H1 (cell line): ENCODE measurements at regions of chr4 and their contacts with region 1.

Region 1: DNA sequence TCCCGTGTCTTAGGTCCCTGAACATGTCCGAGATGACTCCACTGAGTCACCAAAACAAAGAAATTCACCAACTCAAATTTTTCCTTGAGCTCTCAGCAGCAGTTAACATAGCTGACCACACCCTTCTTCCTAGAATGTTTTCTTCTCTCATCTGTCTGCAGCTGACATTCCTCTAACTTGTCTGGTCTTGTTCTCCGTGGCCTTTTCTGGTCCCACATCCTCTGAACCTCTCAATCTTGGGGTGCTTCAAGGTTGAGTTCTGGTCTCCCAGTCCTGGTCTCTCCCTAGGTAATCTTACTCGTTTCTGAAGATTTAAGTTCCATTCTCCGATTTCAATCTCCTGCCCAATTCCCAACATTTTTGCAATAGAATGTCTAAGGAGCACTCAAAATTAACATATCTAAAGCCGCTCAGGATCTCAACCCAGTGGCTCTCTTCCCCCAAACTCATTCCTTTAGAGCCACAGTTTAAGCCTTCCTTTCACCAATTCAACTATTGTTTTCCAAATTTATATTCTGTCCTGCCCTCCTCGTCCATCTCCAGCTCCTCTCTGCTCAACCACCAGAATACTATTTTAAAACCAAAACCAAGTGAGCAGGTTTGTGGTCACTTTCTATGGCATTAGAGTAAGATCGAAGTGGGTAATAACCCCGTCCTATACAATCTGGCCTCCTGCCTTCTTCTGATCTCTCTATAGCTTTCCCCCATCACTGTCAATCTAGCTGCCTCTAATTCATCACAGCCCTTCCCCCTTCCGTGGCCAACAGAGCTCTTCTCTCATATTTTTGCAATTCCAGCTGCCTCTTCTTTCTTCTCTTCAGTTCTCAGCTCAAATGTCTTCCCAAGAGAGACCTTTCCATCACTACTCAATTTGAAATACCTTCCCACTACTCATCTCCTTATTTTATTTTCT is 1.2 kb downstream of the TRIML2 start:
- DNase-seq: peak; percentile 56 to 72
- H3K4me3 ChIP-seq: peak overlapping the region; percentile 31 to 70 (median 37)
- H3K27ac ChIP-seq: peak overlapping the region; percentile 88
- H3K4me1 ChIP-seq: peaks cover 0 to 16% (median 8%) of the 10 kb centered on the region in 4 experiments; a peak in 6 of 7 replicates
- H3K27me3 ChIP-seq: no peaks in the 10 kb centered on the region
- CTCF ChIP-seq: no peak
- EP300 ChIP-seq: 0 out of 3 replicates have a peak, but pooled peaks of 1 of the 2 experiments have one; percentile 51
- POLR2A ChIP-seq: no peak; a peak in 1 of 3 replicates
- RAD21 ChIP-seq: peak in 1 of 2 experiments; percentile 5; a peak in 1 of 4 replicates

Region 2: GRCh38 chr4:187999406-187999932 is 108.7 kb before region 1 on chr4:
- CTCF ChIA-PET with region 1: interaction called, 6 read pairs
- POLR2A ChIA-PET with region 1: interaction called, 11 read pairs
- DNase-seq: peak in 1 of 2 experiments; percentile 16
- H3K4me3 ChIP-seq: peak overlapping the region in 3 of 4 experiments; percentile 10 to 72 (median 18); a peak in 5 of 8 replicates
- H3K27ac ChIP-seq: no peak overlapping the region
- H3K4me1 ChIP-seq: peaks cover 7 to 11% (median 7%) of the 10 kb centered on the region in 4 experiments
- H3K27me3 ChIP-seq: no peaks in the 10 kb centered on the region
- CTCF ChIP-seq: no peak
- EP300 ChIP-seq: no peak
- POLR2A ChIP-seq: peak in 1 of 2 experiments; percentile 64; a peak in 1 of 3 replicates
- RAD21 ChIP-seq: no peak

Region 3: DNA sequence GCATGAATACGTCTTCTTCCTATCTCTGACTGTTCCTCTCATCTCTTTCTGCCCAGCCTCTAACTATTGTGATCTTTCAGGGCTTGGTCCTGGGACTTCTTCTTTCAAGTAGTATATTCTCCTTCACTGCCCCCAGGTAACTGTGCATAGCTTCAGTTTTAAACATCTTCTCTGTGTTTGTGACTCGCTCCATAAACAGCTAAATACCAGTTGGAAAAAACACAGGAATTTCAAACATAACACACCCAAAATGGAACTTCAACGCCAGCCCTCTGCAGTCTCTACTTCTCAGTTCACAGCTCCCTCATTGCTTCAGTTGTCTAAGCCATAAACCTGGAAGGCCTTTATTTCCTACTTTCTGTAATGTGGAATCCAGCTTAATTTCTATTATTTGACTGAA is 15.4 kb before region 1 on chr4:
- CTCF ChIA-PET with region 1: interaction called, 3 read pairs
- POLR2A ChIA-PET with region 1: interaction called, 47 read pairs
- DNase-seq: no peak
- H3K4me3 ChIP-seq: no peak overlapping the region
- H3K27ac ChIP-seq: no peak overlapping the region
- H3K4me1 ChIP-seq: no peaks in the 10 kb centered on the region
- H3K27me3 ChIP-seq: no peaks in the 10 kb centered on the region
- CTCF ChIP-seq: no peak
- EP300 ChIP-seq: no peak
- POLR2A ChIP-seq: no peak
- RAD21 ChIP-seq: no peak

Region 4: DNA sequence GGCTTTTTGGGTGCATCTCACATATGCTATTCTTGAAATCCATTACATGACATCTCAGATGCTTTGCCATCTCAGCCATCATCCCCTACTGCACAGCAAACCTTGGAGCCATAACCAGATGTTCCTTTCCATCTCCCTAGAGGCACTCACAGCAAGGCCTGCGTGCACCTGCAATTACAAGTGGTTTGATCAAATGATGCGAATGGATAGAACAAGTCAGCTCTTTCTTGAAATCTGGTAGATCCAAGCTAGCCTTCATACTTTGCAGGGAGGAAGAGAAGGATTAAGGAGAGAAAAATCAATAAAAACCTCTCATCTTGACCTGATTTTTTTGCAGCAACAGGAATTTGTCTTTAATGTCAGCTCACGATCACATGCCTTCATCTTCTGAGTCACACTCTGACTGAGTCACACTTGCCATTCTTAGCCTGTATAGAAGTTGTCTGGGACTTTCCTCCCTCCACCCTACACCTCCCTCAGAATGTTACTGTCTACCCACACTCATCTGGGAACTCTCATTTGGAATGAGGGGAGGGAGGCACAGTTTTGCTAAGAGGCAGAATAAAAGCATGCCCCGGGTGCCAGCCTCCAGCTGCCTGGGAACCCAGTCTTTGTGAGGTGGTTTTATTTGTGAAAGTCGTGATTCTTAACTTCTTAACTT is 19.2 kb after region 1 on chr4:
- CTCF ChIA-PET with region 1: interaction called, 4 read pairs
- POLR2A ChIA-PET with region 1: interaction called, 13 read pairs
- DNase-seq: no peak
- H3K4me3 ChIP-seq: no peak overlapping the region
- H3K27ac ChIP-seq: no peak overlapping the region
- H3K4me1 ChIP-seq: peaks cover 0 to 3% (median 2%) of the 10 kb centered on the region in 4 experiments; a peak in 5 of 7 replicates
- H3K27me3 ChIP-seq: no peaks in the 10 kb centered on the region
- CTCF ChIP-seq: no peak
- EP300 ChIP-seq: no peak
- POLR2A ChIP-seq: no peak
- RAD21 ChIP-seq: no peak

Region 5: GRCh38 chr4:188295899-188296298 is 187.7 kb after region 1 on chr4:
- CTCF ChIA-PET with region 1: no interaction called
- POLR2A ChIA-PET with region 1: no interaction called
- DNase-seq: no peak
- H3K4me3 ChIP-seq: no peak overlapping the region
- H3K27ac ChIP-seq: no peak overlapping the region
- H3K4me1 ChIP-seq: no peaks in the 10 kb centered on the region; a peak in 1 of 7 replicates
- H3K27me3 ChIP-seq: no peaks in the 10 kb centered on the region
- CTCF ChIP-seq: no peak
- EP300 ChIP-seq: no peak
- POLR2A ChIP-seq: no peak
- RAD21 ChIP-seq: no peak